ENCODE measurements at regions of chr9 and their contacts with region 1.

Region 1: GRCh38 chr9:98129451-98129881 is 10.4 kb upstream of the TRIM14 start:
- DNase-seq: no peak
- H3K4me3 ChIP-seq: no peak overlapping the region
- H3K27ac ChIP-seq: no peak overlapping the region
- H3K4me1 ChIP-seq: no peaks in the 10 kb centered on the region
- H3K27me3 ChIP-seq: no peaks in the 10 kb centered on the region
- CTCF ChIP-seq: no peak

Region 2: GRCh38 chr9:96581786-96582185 is 1547.7 kb before region 1 on chr9:
- CTCF ChIA-PET with region 1: interaction called, 10 read pairs
- dilution Hi-C with region 1: no loop called
- in situ Hi-C with region 1: no loop called
- intact Hi-C with region 1: no loop called
- DNase-seq: no peak
- H3K4me3 ChIP-seq: no peak overlapping the region
- H3K27ac ChIP-seq: no peak overlapping the region
- H3K4me1 ChIP-seq: peaks cover 11% of the 10 kb centered on the region
- H3K27me3 ChIP-seq: no peaks in the 10 kb centered on the region
- CTCF ChIP-seq: no peak

Region 3: DNA sequence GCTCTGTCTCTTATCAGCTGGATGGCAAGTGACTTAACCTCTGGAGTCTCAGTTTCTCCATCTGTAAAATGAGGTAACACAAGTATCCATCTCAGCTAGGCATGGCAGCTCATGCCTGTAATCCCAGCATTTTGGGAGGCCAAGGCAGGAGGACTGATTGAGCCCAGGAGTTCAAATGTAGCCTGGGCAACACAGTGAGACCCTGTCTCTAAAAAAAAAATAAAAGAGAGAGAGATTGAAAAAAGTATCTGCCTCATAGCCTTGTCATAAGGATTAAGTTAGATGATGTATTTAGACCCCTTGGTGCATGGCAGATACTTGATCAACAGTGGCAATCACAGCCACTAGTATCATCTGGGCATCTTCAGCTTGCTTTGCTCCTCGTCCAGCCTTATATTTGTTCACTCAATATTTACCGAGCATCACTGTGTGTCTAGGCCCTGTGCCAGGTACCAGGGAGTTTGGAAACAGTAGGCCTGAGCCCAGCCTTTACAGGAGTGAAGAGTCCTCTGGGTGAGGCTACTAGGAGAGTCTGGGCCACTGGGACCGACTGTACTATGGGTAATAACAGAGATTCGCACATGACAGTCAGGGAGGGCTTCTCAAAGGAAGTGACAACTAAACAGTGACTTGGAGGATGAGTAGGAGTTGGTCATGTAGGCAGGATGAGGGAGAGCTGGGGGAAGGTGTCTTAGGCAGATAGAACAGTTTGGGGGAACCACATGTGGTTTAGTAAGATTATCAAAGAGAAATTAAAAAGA is 28.8 kb after region 1 on chr9:
- CTCF ChIA-PET with region 1: no interaction called
- dilution Hi-C with region 1: loop called (anchors 5 kb)
- in situ Hi-C with region 1: no loop called
- intact Hi-C with region 1: no loop called
- DNase-seq: no peak
- H3K4me3 ChIP-seq: no peak overlapping the region
- H3K27ac ChIP-seq: no peak overlapping the region
- H3K4me1 ChIP-seq: peaks cover 13% of the 10 kb centered on the region
- H3K27me3 ChIP-seq: no peaks in the 10 kb centered on the region
- CTCF ChIP-seq: no peak

Region 4: GRCh38 chr9:98280574-98280973 is 151.1 kb after region 1 on chr9:
- CTCF ChIA-PET with region 1: no interaction called
- dilution Hi-C with region 1: loop called (anchors 5 kb)
- in situ Hi-C with region 1: no loop called
- intact Hi-C with region 1: no loop called
- DNase-seq: no peak
- H3K4me3 ChIP-seq: no peak overlapping the region
- H3K27ac ChIP-seq: no peak overlapping the region
- H3K4me1 ChIP-seq: no peaks in the 10 kb centered on the region
- H3K27me3 ChIP-seq: peaks cover 2% of the 10 kb centered on the region
- CTCF ChIP-seq: no peak

Measured in mammary epithelial cell (primary cell).